RWPE1 (cell line): ENCODE measurements at regions of chr2 and their contacts with region 1.

Region 1: DNA sequence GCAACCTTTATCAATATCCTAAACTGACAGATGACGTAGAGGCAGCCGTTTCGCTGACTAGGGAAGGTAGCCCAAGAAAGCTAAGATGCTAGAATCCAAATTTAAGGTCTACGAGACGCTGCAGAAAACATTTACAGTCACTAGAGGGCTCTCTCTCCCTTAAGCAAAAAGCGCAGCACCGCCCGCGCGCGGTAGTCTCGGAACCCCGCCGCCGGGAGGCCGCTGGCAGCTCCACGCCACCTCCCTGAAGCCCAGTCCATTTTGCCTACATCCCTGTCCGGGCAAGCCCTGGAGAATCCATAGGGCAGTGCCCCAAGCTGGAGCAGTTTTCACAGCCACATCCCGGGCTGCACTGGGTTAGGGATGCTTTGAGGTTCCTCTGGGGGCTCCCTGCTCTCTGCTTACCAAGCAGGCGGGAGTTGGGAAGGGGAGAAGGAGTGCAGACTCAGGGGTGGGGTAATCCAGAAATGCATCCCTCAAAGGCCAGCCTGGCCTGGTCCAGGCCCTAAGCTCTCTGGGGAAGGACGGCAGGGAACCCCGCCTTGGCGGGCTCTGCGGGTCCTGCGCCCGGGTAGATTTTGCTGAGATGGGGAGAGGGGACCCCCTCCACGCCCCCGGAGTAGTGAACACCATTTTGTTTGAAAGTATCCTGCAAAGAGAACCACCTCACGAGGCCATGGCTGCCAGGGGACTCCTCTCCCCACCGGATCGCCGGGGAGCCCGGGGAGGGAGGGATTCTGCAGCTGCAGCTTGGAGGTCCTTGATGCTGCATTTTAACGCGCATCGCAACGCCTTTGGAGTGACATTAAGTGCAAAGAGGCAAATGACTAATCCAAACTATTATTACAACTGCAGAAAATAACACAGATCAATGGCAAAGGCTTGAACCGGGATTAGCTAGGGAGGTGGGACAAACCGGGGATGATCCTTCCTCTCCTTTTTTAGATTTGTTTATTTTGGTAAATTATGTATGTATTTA is 1.3 kb upstream of the DPYSL5 start:
- DNase-seq: peak; percentile 72
- H3K27ac ChIP-seq: no peak overlapping the region
- CTCF ChIP-seq: peak; percentile 88

Region 2: DNA sequence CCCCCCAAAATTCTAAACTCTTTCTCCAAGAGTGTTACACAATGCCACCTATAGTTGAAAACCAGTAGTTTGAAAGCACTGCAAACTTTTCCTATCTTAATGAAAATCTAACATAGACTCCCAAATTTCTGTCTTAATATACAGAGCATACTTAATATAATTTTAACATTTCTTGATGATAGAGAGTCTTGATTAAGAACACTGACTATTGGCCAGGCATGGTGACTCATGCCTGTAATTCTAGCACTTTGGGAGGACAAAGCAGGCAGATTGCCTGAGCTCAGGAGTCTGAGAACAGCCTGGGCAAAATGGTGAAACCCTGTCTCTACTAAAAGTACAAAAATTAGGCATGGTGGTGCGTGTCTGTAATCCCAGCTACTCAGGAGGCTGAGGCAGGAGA is 1002.5 kb before region 1 on chr2:
- CTCF ChIA-PET with region 1: interaction called, 11 read pairs
- POLR2A ChIA-PET with region 1: no interaction called
- DNase-seq: no peak
- H3K27ac ChIP-seq: no peak overlapping the region
- CTCF ChIP-seq: no peak

Region 3: GRCh38 chr2:26757873-26758789 is 88.5 kb before region 1 on chr2:
- CTCF ChIA-PET with region 1: no interaction called
- POLR2A ChIA-PET with region 1: no interaction called
- DNase-seq: peak; percentile 70
- H3K27ac ChIP-seq: peak overlapping the region; percentile 95
- CTCF ChIP-seq: no peak

Region 4: GRCh38 chr2:26769089-26769761 is 77.4 kb before region 1 on chr2:
- CTCF ChIA-PET with region 1: interaction called, 10 read pairs
- POLR2A ChIA-PET with region 1: no interaction called
- DNase-seq: peak; percentile 74
- H3K27ac ChIP-seq: peak overlapping the region; percentile 97
- CTCF ChIP-seq: no peak

Region 5: GRCh38 chr2:26922405-26923188 is 76.0 kb after region 1 on chr2:
- CTCF ChIA-PET with region 1: interaction called, 21 read pairs
- POLR2A ChIA-PET with region 1: no interaction called
- DNase-seq: peak; percentile 43
- H3K27ac ChIP-seq: no peak overlapping the region
- CTCF ChIP-seq: no peak

Region 6: DNA sequence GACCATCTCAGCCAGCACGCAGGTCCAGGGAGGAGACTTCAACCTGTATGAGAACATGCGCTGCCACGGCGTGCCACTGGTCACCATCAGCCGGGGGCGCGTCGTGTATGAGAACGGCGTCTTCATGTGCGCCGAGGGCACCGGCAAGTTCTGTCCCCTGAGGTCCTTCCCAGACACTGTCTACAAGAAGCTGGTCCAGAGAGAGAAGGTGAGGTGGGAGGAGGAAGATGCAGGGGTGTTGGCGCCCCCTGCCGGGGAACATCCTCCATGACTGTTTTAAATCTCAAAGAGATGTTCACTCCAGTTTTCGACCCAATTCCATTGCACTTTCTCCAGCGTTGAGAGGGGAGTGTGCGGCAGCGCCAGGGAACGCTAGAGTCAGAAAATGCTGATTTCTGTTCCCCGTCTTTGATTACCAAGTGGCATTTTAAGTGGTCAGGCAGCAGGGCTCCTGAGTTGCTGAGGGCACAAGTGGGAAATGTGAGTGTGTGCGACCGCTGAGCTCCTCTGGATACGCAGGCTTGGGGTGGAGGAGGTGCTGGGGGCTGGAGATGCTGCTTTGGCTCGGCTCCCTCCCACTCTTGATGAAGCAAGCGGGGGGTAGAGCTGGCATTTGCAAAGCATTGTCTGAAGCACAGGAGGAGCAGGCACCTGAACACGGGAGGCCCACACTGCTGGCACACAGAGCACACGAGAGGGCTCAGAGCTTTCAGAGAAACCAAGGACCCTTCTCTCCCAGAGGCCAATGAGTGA is 96.1 kb after region 1 on chr2:
- CTCF ChIA-PET with region 1: interaction called, 23 read pairs
- POLR2A ChIA-PET with region 1: no interaction called
- DNase-seq: peak; percentile 53
- H3K27ac ChIP-seq: no peak overlapping the region
- CTCF ChIP-seq: peak; percentile 66